Sigmoid colon (tissue), 7 donors: ENCODE measurements at regions of chr16 and their contacts with region 1.

Region 1: DNA sequence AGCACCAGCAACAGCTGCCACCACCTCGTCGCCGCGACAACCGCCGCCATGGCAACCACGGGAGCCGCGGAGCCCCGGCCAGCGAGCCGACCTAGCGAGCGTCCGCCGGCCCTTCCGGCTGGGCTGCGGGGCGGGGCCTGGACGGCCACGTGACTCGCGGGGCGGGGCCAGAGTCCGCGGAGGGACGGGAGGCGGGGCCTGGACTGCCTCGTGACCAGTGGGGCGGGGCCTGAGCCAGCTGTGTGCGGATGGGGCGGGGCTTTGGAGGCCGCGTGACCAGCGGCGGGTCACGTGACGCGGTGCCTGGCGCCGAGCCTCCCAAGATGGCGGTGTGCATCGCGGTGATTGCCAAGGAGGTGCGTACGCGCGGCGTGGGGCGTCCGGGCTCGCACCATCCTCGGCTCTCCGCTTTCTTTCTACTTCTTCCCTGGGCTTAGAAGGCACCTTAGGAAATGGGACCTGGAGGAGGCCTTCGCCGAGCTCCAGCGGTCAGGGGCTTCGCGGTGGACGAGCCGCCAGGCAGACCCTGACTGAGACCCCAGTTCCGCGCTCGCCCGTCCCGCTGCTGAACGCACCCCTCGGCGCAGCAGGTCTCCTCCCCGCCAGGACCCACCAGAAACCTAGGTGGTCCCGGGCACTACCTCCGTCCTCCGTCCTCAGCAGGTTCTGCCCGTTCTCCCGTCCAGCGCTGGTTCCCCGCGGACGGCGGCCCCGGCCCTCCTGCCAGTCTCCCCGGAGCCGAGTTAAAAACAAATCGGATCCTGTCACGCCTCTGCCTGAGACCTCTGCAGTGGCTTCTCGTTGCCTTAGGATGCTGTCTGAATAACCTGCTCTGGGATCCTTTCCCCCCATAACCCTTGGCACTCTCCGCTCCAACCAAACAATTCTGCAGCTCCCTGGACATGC is at the starts of genes GALNS and TRAPPC2L:
- DNase-seq: peak; percentile 99
- H3K4me3 ChIP-seq: peak within 1 kb of the TSS; percentile 70 to 95 (median 80)
- H3K27ac ChIP-seq: peak within 1 kb of the TSS; percentile 77 to 88 (median 82)
- H3K4me1 ChIP-seq: peaks cover 0 to 27% (median 20%) of the 10 kb centered on the region in 4 donors
- H3K27me3 ChIP-seq: no peaks in the 10 kb centered on the region
- CTCF ChIP-seq: no peak
- EP300 ChIP-seq: no peak
- POLR2A ChIP-seq: peak; percentile 25 to 65
- total RNA-seq, gene GALNS: 6.7 to 50.4 (median 11.4) TPM
- total RNA-seq, gene TRAPPC2L: 30.7 to 42.1 (median 39.3) TPM

Region 2: DNA sequence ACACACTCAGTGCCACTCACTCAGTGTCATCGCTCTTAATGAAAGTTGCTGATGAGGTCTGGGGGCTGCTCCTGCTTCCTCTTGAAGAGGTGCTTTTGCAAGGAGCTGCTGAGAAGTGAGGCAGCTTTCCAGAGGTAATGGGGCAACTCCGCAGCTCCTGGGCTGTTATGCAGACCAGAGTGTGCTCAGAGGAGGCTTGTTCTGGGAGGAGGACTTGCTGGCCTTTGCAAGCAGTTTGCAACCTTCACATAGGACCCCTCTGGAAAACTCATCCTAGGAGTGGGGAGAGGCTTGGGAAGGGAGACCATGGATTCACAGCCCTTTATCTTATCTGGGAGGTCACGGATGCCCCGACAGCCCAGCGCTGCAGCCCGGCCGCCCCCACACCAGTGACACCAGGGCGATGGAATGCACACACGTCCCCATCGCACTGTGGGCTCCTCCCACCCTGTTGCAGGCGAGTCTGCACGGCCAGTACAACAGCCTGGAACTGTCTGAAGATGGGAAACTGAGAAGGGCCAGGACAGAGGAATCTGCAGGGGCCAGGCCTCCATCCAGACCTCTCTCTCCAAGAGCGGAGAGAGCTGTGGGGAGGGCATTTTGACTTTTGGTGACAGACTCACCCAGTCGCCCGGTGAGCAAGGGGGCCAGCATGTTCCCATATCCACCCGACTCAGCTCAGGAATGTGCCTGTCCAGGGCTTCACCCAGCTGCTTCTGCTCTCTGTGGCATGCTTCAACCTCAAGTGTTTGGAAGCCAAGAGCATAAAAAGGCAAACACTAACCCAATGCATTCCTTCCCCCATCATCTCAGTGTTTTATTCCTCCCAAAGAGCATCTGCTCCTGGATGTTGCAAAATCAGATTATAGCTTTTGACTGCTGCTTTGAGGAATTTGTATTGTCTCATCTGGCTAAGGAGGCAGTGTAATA is 552.9 kb before region 1 on chr16:
- intact Hi-C with region 1: no loop called
- DNase-seq: peak; percentile 78
- H3K4me3 ChIP-seq: peak overlapping the region in 1 of 4 donors; percentile 1
- H3K27ac ChIP-seq: peak overlapping the region; percentile 19 to 78 (median 62)
- H3K4me1 ChIP-seq: peaks cover 0 to 45% (median 35%) of the 10 kb centered on the region in 4 donors
- H3K27me3 ChIP-seq: no peaks in the 10 kb centered on the region
- CTCF ChIP-seq: no peak
- EP300 ChIP-seq: no peak
- POLR2A ChIP-seq: no peak

Region 3: DNA sequence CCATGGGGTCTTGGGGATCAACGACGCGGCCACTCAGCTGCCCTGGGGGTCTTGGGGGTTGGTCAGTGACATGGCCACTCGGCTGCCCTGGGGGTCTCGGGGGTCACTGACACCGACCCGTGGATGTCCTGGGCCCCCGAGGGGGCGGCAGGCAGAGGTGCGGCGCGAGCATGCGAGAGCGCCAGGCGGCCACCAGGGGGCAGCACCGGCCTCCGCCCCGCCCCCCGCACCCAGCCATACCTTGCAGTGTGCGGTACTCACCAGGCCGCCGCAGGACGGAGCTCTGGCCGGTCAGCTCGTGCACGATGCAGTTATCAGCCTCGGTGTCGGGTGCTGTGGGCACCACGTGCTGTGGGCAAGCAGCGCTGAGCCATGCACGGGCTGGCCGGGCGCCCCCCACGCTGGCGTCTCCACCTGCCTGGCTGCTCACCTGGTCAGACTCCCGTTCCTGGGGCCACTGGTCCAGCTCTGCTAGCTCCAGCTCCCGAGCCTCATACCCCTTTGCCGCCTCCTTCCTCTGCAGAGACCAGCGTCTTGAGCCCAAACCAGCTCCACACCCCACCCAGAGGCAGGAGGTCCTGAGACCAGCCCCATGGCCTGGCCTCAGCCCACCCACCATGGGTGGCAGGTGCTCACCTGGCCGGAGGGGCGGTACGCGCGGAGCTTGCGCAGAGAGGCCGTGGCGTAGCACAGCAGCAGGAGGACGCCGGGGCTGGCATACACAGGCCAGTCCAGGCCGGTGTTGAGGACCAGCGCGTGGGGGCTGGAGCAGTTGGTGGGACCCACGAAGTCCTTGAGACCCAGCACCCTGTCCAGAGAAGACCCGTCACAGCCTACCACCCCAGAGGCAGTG is 119.6 kb before region 1 on chr16:
- intact Hi-C with region 1: loop called (anchors 5 kb)
- DNase-seq: peak; percentile 89
- H3K4me3 ChIP-seq: no peak overlapping the region
- H3K27ac ChIP-seq: peak overlapping the region in 3 of 4 donors; percentile 60 to 71 (median 65)
- H3K4me1 ChIP-seq: peaks cover 0 to 10% (median 8%) of the 10 kb centered on the region in 4 donors
- H3K27me3 ChIP-seq: no peaks in the 10 kb centered on the region
- CTCF ChIP-seq: peak; percentile 93 to 100 (median 98)
- EP300 ChIP-seq: no peak
- POLR2A ChIP-seq: no peak

Region 4: DNA sequence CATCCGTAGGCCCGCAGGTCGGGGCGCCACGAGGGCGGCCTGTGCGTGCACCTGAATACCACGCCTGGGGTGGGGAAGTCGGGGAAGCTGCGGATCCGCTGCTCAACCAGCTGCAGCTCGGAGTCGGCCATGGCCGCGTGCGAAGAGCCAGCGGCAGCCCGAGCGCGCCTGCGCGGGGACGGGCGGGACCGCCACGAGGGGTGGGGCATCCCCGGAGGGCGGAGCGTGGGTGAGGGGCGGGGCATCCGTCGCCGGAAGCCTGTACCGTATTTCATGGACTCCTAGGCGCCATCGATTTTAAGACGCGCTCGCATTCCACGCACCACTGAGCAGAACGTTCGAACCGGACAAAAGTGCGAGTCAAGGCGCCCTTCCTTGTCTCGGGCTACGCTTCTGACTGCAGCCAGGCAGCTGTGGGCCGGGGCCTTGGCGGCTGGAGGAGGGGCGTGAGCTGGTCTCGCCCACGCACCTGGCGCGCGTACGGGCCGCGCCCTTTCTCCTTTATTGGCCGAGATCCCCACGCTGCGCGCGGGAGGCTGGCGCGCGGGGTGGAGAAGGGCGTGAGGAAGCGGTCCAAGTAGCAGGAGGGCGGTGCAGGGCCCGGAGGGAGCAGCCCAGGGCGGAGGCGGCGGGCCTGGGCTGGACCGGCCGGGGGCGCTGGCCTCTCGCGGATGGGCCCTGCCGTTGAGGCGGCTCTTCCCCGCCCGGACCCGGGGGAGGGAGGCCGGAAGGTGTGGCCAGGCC is 45.1 kb before region 1 on chr16 and contains the start of gene APRT:
- intact Hi-C with region 1: loop called (anchors 1 kb)
- DNase-seq: peak; percentile 97
- H3K4me3 ChIP-seq: peak within 1 kb of the TSS; percentile 63 to 88 (median 76)
- H3K27ac ChIP-seq: peak within 1 kb of the TSS; percentile 91 to 96 (median 96)
- H3K4me1 ChIP-seq: peaks cover 0 to 36% (median 28%) of the 10 kb centered on the region in 4 donors
- H3K27me3 ChIP-seq: no peaks in the 10 kb centered on the region
- CTCF ChIP-seq: peak in 2 of 4 experiments; percentile 9 to 24
- EP300 ChIP-seq: peak in 1 of 4 donors; percentile 46
- POLR2A ChIP-seq: no peak
- total RNA-seq, gene APRT: 56.6 to 78.3 (median 62.5) TPM

Region 5: DNA sequence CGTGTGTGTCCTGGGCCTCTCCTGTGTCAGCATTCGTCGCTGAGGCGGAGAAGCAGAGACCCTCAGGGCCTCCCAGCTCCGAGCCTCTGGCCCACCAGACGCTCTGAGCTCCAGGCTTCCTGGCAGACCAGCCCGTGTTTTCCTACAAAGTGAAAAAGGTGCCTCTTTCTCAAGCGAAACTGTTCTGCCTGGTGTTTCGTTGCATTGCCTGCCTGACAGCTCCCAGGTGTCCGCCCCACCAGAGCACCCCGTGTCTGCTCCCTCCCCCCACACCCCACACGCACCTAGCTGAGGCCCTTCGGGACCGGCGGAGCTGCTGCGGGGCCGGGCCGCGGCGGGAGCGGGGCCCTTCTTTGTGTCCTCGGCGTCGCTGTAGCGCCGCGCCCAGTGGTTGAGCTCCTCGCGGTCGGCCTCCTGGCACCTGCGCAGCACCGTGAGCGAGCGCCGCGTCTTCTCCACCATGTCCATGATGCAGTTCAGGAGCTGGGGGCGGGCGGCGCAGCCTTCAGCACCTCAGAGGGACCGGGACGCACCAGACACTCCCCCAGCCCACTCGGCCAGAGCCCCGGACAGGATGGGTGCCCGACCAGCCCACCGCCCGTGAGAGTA is 24.0 kb after region 1 on chr16:
- intact Hi-C with region 1: no loop called
- DNase-seq: no peak
- H3K4me3 ChIP-seq: no peak overlapping the region
- H3K27ac ChIP-seq: no peak overlapping the region
- H3K4me1 ChIP-seq: peaks cover 0 to 9% (median 0%) of the 10 kb centered on the region in 4 donors
- H3K27me3 ChIP-seq: peaks cover 4 to 40% (median 25%) of the 10 kb centered on the region in 3 donors
- CTCF ChIP-seq: no peak
- EP300 ChIP-seq: no peak
- POLR2A ChIP-seq: no peak